ENCODE measurements at regions of chr18 and their contacts with region 1.

Region 1: DNA sequence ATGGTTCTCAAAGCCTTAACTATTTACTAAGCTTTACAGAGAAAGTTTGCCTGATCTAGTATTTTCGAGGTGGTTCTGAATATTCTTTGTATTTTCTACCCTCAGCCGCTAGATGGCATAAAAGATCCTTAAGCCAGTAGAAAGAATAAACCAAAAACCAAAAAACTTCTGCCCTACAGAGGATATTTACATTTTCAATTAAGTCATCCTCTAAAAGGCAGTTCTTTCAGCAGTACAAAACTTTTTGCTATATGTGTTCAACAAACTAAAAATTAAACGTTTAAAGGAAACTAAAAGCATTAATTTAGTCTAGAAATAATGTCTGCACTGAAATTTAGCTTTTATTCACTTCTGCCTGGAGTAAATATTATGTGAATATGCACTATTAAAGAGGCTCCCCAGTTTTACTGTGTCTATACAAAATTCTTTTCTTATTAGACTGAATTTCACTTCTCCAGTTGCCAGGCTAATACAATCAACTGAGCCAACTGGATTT is 297.5 kb downstream of the PIEZO2 start:
- DNase-seq: no peak
- ATAC-seq: no peak
- H3K4me3 Mint-ChIP-seq: no peak overlapping the region
- H3K27ac Mint-ChIP-seq: no peak overlapping the region
- H3K4me1 Mint-ChIP-seq: no peaks in the 10 kb centered on the region
- H3K27me3 Mint-ChIP-seq: peaks cover 3% of the 10 kb centered on the region
- CTCF ChIP-seq: peak; percentile 81

Region 2: GRCh38 chr18:11040823-11041656 is 189.2 kb after region 1 on chr18:
- CTCF ChIA-PET with region 1: interaction called, 10 read pairs
- POLR2A ChIA-PET with region 1: no interaction called
- intact Hi-C with region 1: loop called (anchors 2 kb)
- DNase-seq: peak; percentile 35
- ATAC-seq: no peak
- H3K4me3 Mint-ChIP-seq: no peak overlapping the region
- H3K27ac Mint-ChIP-seq: no peak overlapping the region
- H3K4me1 Mint-ChIP-seq: no peaks in the 10 kb centered on the region
- H3K27me3 Mint-ChIP-seq: peaks cover 5% of the 10 kb centered on the region
- CTCF ChIP-seq: peak; percentile 67

Region 3: GRCh38 chr18:11149441-11150270 is 297.8 kb after region 1 on chr18 and contains the start of gene PIEZO2:
- CTCF ChIA-PET with region 1: interaction called, 4 read pairs
- POLR2A ChIA-PET with region 1: no interaction called
- intact Hi-C with region 1: loop called (anchors 5 kb)
- DNase-seq: peak; percentile 17
- ATAC-seq: peak; percentile 51
- H3K4me3 Mint-ChIP-seq: no peak within 1 kb of the TSS
- H3K27ac Mint-ChIP-seq: no peak within 1 kb of the TSS
- H3K4me1 Mint-ChIP-seq: no peaks in the 10 kb centered on the region
- H3K27me3 Mint-ChIP-seq: peaks cover 24% of the 10 kb centered on the region
- CTCF ChIP-seq: no peak
- total RNA-seq, gene PIEZO2: not detected

Region 4: DNA sequence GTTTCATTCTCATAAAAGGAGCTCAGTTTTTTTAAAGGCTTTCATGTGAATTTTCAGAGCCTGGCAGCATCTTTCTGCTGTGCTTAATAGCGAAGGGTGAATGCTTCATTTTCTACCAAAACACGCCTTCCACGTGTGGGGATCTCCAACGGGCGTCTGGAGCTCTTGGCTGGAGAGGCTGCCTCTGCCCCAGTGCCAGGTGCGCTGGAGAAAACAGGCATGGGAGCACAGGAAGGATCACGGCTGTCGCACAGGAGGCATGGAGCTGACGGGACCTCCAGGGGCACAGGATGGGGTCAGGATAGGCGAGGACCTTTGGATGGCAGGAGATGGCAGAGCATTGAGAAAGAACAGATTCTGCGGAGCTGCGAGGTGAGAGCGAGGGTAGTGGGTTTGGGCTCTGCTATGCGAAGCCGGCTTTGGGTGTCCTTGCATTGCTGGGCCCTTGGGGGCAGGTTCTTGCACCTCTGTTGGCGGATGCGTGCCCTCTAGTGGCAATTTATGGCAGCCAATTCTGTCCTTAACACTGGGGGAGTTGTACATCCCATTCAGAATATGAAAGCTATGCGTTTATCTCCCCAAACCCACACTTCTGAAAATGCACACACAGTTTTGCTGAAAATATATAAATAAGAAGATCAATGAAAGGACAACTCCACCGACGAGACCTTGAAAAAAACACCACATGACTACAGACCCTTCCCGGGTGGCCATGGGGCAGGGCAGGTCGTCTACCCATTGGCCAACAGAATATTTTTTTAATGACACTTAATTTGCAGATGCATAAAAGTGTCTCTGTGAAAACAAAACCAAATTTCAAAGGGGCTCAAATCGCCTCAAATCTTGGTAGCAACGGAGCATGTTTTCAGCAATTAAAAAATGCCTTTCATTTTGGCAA is 667.2 kb after region 1 on chr18:
- CTCF ChIA-PET with region 1: interaction called, 10 read pairs
- POLR2A ChIA-PET with region 1: no interaction called
- intact Hi-C with region 1: no loop called
- DNase-seq: peak; percentile 69
- ATAC-seq: peak; percentile 61
- H3K4me3 Mint-ChIP-seq: no peak overlapping the region
- H3K27ac Mint-ChIP-seq: no peak overlapping the region
- H3K4me1 Mint-ChIP-seq: no peaks in the 10 kb centered on the region
- H3K27me3 Mint-ChIP-seq: no peaks in the 10 kb centered on the region
- CTCF ChIP-seq: peak; percentile 70

Measured in activated CD8-positive, alpha-beta T cell treated with anti-CD3 and anti-CD28 coated beads for 36 hours (primary cell).